GM12878 (cell line): ENCODE measurements at regions of chr1 and their contacts with region 1.

Region 1: GRCh38 chr1:203692565-203693470 is 66.2 kb downstream of the ATP2B4 start:
- DNase-seq: no peak
- ATAC-seq: peak; percentile 37; the same call in 2 of the 3 replicates
- H3K4me3 ChIP-seq: no peak overlapping the region
- H3K27ac ChIP-seq: no peak overlapping the region
- H3K4me1 ChIP-seq: no peaks in the 10 kb centered on the region
- H3K27me3 ChIP-seq: peaks cover 0 to 2% of the 10 kb centered on the region in 2 experiments; a peak in 2 of 4 replicates
- CTCF ChIP-seq: no peak
- EP300 ChIP-seq: no peak
- POLR2A ChIP-seq: no peak
- RAD21 ChIP-seq: no peak

Region 2: GRCh38 chr1:203504397-203505250 is 188.2 kb before region 1 on chr1:
- CTCF ChIA-PET with region 1: interaction called, 12 read pairs
- POLR2A ChIA-PET with region 1: no interaction called
- RAD21 ChIA-PET with region 1: interaction called, 3 read pairs
- SMC1A ChIA-PET with region 1: interaction called, 8 read pairs
- in situ Hi-C with region 1: no loop called
- intact Hi-C with region 1: no loop called
- DNase-seq: peak; percentile 20
- ATAC-seq: peak; percentile 93
- H3K4me3 ChIP-seq: no peak overlapping the region
- H3K27ac ChIP-seq: no peak overlapping the region
- H3K4me1 ChIP-seq: no peaks in the 10 kb centered on the region
- H3K27me3 ChIP-seq: no peaks in the 10 kb centered on the region; a peak in 1 of 4 replicates
- CTCF ChIP-seq: peak; percentile 72 to 73 (median 72)
- EP300 ChIP-seq: no peak
- POLR2A ChIP-seq: no peak
- RAD21 ChIP-seq: peak; percentile 84

Region 3: DNA sequence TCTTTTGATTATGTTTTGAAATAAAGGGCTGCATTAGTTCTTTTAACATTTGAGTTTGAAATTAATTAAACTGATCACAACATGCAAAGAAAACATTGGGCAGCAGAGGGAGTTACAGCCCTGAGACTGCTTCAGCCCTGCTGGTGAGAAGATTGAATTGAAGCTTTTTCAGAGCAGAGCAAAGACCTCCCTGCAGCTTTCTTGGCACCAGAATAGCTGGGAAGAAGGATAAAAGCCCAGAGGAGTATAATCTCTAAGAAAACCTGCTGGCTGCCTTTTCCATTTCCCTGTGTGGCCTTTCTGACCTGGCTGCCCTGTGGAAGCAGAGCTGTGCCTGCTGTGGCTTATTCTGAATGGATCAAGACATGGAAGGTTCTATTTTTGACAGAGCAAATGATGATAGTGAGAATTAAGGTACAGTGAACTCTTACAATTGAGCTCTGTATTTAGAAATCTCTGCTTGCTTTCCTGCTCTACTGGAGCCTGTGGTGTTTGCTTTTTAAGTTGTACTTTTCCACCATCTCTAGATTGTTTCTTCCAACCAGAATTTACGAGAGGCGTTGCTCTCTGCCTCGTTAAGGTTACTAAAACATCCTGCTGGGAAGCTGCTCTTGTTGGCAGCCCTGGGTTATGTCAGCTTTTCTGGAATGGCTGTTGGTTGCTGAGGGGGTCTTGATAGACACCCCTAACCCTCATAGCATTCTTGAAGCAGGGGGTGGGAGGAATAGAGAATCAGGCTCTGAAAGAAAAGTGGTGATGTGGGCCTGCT is 178.5 kb after region 1 on chr1:
- CTCF ChIA-PET with region 1: no interaction called
- POLR2A ChIA-PET with region 1: no interaction called
- RAD21 ChIA-PET with region 1: no interaction called
- SMC1A ChIA-PET with region 1: no interaction called
- in situ Hi-C with region 1: no loop called
- intact Hi-C with region 1: no loop called
- DNase-seq: no peak
- ATAC-seq: peak; percentile 88
- H3K4me3 ChIP-seq: no peak overlapping the region
- H3K27ac ChIP-seq: no peak overlapping the region
- H3K4me1 ChIP-seq: no peaks in the 10 kb centered on the region
- H3K27me3 ChIP-seq: no peaks in the 10 kb centered on the region
- CTCF ChIP-seq: peak; percentile 64 to 67 (median 67)
- EP300 ChIP-seq: no peak
- POLR2A ChIP-seq: no peak
- RAD21 ChIP-seq: peak; percentile 56